Naive thymus-derived CD4-positive, alpha-beta T cell (primary cell): ENCODE measurements at regions of chr6 and their contacts with region 1.

Region 1: GRCh38 chr6:142551274-142551811 is 249.5 kb downstream of the ADGRG6 start:
- DNase-seq: peak in 8 of 9 donors; percentile 34 to 67 (median 58)
- ATAC-seq: peak; percentile 94
- H3K4me3 ChIP-seq: no peak overlapping the region
- H3K4me3 Mint-ChIP-seq: peak overlapping the region; percentile 21 to 81 (median 58)
- H3K27ac ChIP-seq: no peak overlapping the region
- H3K27ac Mint-ChIP-seq: peak overlapping the region in 5 of 9 donors; percentile 5 to 85 (median 60)
- H3K4me1 ChIP-seq: peaks cover 0 to 23% of the 10 kb centered on the region in 2 donors
- H3K4me1 Mint-ChIP-seq: peaks cover 14 to 47% (median 35%) of the 10 kb centered on the region in 7 donors
- H3K27me3 ChIP-seq: no peaks in the 10 kb centered on the region
- H3K27me3 Mint-ChIP-seq: no peaks in the 10 kb centered on the region

Region 2: GRCh38 chr6:142482973-142483372 is 68.4 kb before region 1 on chr6:
- CTCF ChIA-PET with region 1: no interaction called
- POLR2A ChIA-PET with region 1: no interaction called
- intact Hi-C with region 1: loop called in 1 of 2 experiments (anchors 5 kb)
- DNase-seq: no peak
- ATAC-seq: no peak
- H3K4me3 ChIP-seq: no peak overlapping the region
- H3K4me3 Mint-ChIP-seq: no peak overlapping the region
- H3K27ac ChIP-seq: no peak overlapping the region
- H3K27ac Mint-ChIP-seq: no peak overlapping the region
- H3K4me1 ChIP-seq: no peaks in the 10 kb centered on the region
- H3K4me1 Mint-ChIP-seq: peaks cover 0 to 4% (median 0%) of the 10 kb centered on the region in 7 donors
- H3K27me3 ChIP-seq: no peaks in the 10 kb centered on the region
- H3K27me3 Mint-ChIP-seq: no peaks in the 10 kb centered on the region